ENCODE measurements at regions of chr18 and their contacts with region 1.

Region 1: DNA sequence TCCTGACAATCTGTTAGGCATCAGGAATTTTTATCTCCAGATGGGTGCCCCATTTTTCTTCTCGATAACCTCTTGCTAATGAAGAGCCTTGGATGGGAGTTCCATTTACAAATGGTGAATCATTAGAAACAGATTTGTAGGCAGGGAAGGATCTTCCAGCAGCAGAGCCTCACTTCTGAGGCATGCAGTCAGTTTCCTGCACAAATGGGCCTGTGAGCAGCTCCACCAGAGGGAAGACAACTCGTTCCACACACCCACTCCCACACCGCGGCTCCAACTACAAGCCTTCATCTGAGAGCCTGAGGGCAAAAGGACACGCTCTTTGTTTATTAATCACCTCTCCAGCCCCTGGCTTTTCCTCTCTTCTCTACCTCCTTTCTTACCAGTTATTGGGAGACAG is 108.5 kb downstream of the CTAGE1 start:
- DNase-seq: no peak

Region 2: GRCh38 chr18:22286621-22287020 is 22.6 kb before region 1 on chr18:
- intact Hi-C with region 1: loop called in 1 of 2 experiments (anchors 2 kb)
- DNase-seq: no peak